CD8-positive, alpha-beta T cell (primary cell): ENCODE measurements at regions of chr19 and their contacts with region 1.

Region 1: GRCh38 chr19:42132851-42133528 is 744 bp upstream of the POU2F2 start:
- DNase-seq: peak; percentile 69 to 95 (median 83)
- ATAC-seq: peak; percentile 69
- H3K4me3 ChIP-seq: peak overlapping the region; percentile 64 to 96
- H3K4me3 Mint-ChIP-seq: peak overlapping the region; percentile 83
- H3K27ac ChIP-seq: peak overlapping the region; percentile 54 to 68
- H3K27ac Mint-ChIP-seq: peak overlapping the region; percentile 86
- H3K4me1 ChIP-seq: peaks cover 66% of the 10 kb centered on the region
- H3K4me1 Mint-ChIP-seq: peaks cover 63% of the 10 kb centered on the region
- H3K27me3 ChIP-seq: no peaks in the 10 kb centered on the region
- H3K27me3 Mint-ChIP-seq: no peaks in the 10 kb centered on the region
- CTCF ChIP-seq: peak; percentile 93

Region 2: GRCh38 chr19:41801792-41802211 is 331.2 kb before region 1 on chr19:
- CTCF ChIA-PET with region 1: no interaction called
- POLR2A ChIA-PET with region 1: no interaction called
- intact Hi-C with region 1: no loop called
- DNase-seq: no peak
- ATAC-seq: no peak
- H3K4me3 ChIP-seq: no peak overlapping the region
- H3K4me3 Mint-ChIP-seq: no peak overlapping the region
- H3K27ac ChIP-seq: no peak overlapping the region
- H3K27ac Mint-ChIP-seq: no peak overlapping the region
- H3K4me1 ChIP-seq: no peaks in the 10 kb centered on the region
- H3K4me1 Mint-ChIP-seq: peaks cover 12% of the 10 kb centered on the region
- H3K27me3 ChIP-seq: no peaks in the 10 kb centered on the region
- H3K27me3 Mint-ChIP-seq: peaks cover 2% of the 10 kb centered on the region
- CTCF ChIP-seq: no peak

Region 3: DNA sequence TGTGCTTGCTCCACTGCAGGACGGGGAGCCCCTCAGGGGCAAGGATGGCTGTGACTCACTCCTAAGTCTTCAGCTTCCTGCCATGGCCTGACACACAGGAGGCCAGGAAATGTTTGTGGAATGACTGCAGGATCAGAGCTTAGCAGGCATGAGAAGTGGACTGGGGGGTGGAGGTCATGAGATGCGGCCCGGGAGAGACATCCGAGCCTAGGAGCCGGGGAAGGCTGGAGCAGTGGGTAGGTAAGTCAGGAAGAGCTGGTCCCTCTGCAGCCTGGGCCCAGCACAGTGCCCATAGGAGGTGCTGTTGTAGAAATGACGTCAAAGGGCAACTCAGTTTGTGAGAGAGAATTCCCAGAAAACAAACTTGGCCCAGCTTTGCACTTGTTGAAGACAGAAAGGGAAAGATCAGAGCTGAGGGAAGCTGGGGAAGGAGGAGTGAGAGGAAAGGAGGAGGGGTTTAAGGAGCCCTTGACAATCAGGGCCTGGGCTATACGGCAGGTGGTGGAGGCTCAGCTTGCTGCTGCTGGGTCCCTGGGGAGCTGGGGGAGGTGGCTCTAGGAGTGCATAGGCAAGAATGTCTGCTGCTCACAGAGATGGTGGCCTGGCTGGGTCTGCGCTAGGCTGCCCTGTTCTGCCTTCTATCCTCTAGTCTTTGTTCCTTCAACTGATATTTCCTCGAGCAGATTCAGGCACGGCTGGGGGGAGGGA is 19.2 kb before region 1 on chr19:
- CTCF ChIA-PET with region 1: interaction called, 38 read pairs
- POLR2A ChIA-PET with region 1: no interaction called
- intact Hi-C with region 1: loop called (anchors 1 kb)
- DNase-seq: no peak
- ATAC-seq: no peak
- H3K4me3 ChIP-seq: no peak overlapping the region
- H3K4me3 Mint-ChIP-seq: no peak overlapping the region
- H3K27ac ChIP-seq: no peak overlapping the region
- H3K27ac Mint-ChIP-seq: peak overlapping the region; percentile 69
- H3K4me1 ChIP-seq: peaks cover 2% of the 10 kb centered on the region
- H3K4me1 Mint-ChIP-seq: peaks cover 8% of the 10 kb centered on the region
- H3K27me3 ChIP-seq: no peaks in the 10 kb centered on the region
- H3K27me3 Mint-ChIP-seq: no peaks in the 10 kb centered on the region
- CTCF ChIP-seq: no peak

Region 4: GRCh38 chr19:42184401-42184861 is 51.4 kb after region 1 on chr19:
- CTCF ChIA-PET with region 1: interaction called, 75 read pairs
- POLR2A ChIA-PET with region 1: interaction called, 3 read pairs
- intact Hi-C with region 1: loop called (anchors 1 kb)
- DNase-seq: peak; percentile 35 to 83 (median 74)
- ATAC-seq: peak; percentile 67
- H3K4me3 ChIP-seq: no peak overlapping the region
- H3K4me3 Mint-ChIP-seq: no peak overlapping the region
- H3K27ac ChIP-seq: peak overlapping the region in 1 of 2 experiments; percentile 33
- H3K27ac Mint-ChIP-seq: no peak overlapping the region
- H3K4me1 ChIP-seq: peaks cover 20% of the 10 kb centered on the region
- H3K4me1 Mint-ChIP-seq: peaks cover 41% of the 10 kb centered on the region
- H3K27me3 ChIP-seq: peaks cover 0 to 3% of the 10 kb centered on the region in 2 experiments
- H3K27me3 Mint-ChIP-seq: peaks cover 4% of the 10 kb centered on the region
- CTCF ChIP-seq: peak; percentile 81

Region 5: GRCh38 chr19:42244347-42245220 is 111.6 kb after region 1 on chr19:
- CTCF ChIA-PET with region 1: interaction called, 21 read pairs
- POLR2A ChIA-PET with region 1: interaction called, 5 read pairs
- intact Hi-C with region 1: loop called (anchors 1 kb)
- DNase-seq: peak; percentile 79 to 96 (median 91)
- ATAC-seq: peak; percentile 38
- H3K4me3 ChIP-seq: peak overlapping the region; percentile 68 to 85
- H3K4me3 Mint-ChIP-seq: peak overlapping the region; percentile 98
- H3K27ac ChIP-seq: peak overlapping the region; percentile 49 to 92
- H3K27ac Mint-ChIP-seq: peak overlapping the region; percentile 94
- H3K4me1 ChIP-seq: peaks cover 36% of the 10 kb centered on the region
- H3K4me1 Mint-ChIP-seq: peaks cover 50% of the 10 kb centered on the region
- H3K27me3 ChIP-seq: no peaks in the 10 kb centered on the region
- H3K27me3 Mint-ChIP-seq: no peaks in the 10 kb centered on the region
- CTCF ChIP-seq: peak; percentile 68

Region 6: DNA sequence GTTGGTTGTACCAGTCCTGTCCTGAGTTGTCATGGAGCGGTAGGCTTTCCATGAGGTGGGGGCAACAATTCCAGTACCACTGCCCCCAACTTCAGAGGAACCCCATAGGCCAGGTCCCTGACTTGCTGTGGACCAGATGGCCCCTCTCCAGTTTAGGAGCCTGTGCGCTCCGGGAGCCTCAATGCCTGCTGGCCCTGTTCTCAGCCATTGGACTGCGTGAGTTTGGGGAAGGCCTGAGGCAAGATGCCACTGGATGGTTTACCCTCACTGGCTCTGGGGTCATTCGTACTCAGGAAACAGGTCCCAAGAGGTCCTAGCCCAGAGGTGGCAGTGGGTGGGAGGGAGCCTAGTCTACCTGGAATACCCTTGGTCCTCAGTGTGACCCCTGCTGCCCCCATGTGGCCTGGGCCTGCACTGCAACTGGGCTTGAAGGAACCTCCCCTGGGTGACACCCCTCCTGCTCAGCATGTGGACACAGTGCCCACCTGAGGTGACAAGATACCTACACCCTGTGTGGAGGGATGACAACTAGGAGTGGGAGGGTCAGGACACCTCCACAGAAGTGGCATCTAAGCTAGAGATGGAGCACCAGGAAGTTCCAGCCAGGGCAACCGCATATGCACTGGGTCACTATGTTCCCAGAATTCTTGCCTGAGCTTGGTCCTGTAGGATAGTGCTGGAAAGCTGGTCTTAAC is 163.0 kb after region 1 on chr19:
- CTCF ChIA-PET with region 1: interaction called, 15 read pairs
- POLR2A ChIA-PET with region 1: no interaction called
- intact Hi-C with region 1: loop called (anchors 1 kb)
- DNase-seq: peak; percentile 85 to 95 (median 89)
- ATAC-seq: peak; percentile 100
- H3K4me3 ChIP-seq: no peak overlapping the region
- H3K4me3 Mint-ChIP-seq: no peak overlapping the region
- H3K27ac ChIP-seq: no peak overlapping the region
- H3K27ac Mint-ChIP-seq: no peak overlapping the region
- H3K4me1 ChIP-seq: peaks cover 8% of the 10 kb centered on the region
- H3K4me1 Mint-ChIP-seq: peaks cover 9% of the 10 kb centered on the region
- H3K27me3 ChIP-seq: no peaks in the 10 kb centered on the region
- H3K27me3 Mint-ChIP-seq: no peaks in the 10 kb centered on the region
- CTCF ChIP-seq: peak; percentile 96

Region 7: DNA sequence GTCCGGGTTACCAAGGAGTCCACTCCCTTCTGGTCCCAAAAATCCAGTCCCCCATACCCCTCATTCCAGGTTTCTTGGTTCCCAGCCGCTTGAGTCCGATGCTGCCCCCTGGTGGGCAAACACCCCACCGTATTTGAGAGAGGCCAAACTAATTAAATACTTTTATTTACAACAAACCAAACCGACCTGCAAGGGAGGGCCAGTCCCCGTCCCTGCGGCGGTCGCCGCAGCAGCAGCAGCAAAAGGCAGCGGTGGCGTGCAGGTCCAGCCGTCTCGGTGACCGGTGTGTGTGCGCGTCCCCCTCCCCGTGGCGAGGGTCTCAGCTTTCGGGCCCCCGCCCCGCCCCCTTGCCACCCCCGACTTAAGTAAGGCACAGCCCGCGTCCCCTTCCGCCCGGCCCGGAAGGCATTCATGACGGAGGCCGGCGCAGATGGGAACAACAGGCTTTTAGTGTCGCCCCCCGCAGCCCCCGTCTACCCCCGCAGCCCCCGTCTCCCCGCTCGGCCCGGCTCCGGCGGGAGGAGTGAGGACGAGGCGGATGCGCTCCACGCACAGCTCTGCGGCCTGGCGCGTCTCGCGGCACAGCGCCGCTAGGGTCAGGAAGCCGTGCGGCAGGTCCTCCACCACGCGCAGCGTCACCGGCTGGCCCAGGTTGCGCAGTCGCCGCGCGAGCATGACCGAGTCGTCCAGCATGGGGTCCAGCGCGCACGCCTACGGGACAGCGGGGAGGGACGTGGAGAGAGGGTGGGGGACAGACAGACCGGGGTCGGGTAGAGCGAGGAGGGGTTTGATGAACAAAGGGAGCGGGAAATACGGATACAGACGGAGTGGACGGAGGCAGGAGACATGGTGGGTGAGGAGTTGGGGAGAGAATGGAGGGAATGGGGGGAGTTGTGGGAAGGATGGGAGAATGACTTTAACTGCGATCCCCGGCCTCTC is 268.6 kb after region 1 on chr19:
- CTCF ChIA-PET with region 1: interaction called, 3 read pairs
- POLR2A ChIA-PET with region 1: interaction called, 3 read pairs
- intact Hi-C with region 1: loop called (anchors 1 kb)
- DNase-seq: peak; percentile 56 to 86 (median 77)
- ATAC-seq: peak; percentile 71
- H3K4me3 ChIP-seq: peak overlapping the region; percentile 47 to 61
- H3K4me3 Mint-ChIP-seq: peak overlapping the region; percentile 85
- H3K27ac ChIP-seq: peak overlapping the region; percentile 25 to 46
- H3K27ac Mint-ChIP-seq: peak overlapping the region; percentile 88
- H3K4me1 ChIP-seq: peaks cover 18% of the 10 kb centered on the region
- H3K4me1 Mint-ChIP-seq: peaks cover 41% of the 10 kb centered on the region
- H3K27me3 ChIP-seq: no peaks in the 10 kb centered on the region
- H3K27me3 Mint-ChIP-seq: no peaks in the 10 kb centered on the region
- CTCF ChIP-seq: peak; percentile 79